A673 (cell line): ENCODE measurements at regions of chrX and their contacts with region 1.

Region 1: DNA sequence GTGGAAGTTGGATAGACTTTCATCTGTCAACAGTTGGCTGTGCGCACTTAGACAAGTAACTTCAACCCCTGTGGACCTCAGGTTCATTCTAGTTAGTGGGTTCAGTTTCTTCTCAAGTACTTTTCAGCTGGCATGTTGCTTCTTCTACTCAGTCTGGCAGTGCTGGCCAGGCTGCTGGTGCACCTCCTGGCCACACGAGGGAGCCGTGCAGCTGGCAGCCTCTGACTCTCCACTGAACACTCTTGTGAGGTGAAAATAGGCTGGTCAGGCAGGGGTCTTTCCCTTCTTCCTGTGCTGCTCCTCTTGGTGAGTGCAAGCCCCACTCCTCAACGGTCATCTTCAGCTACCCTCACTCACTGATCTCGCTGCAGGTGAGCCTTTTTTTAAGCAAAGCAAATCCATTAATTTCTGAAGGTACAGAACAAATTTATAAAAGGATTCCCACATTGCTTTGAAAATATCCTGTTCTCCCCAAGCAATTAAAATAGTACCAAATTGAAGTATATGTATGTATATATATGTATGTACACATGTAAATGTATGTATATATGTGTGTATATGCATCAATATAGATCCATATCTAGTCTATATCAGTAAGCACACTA is 30.6 kb downstream of the LONRF3 start:
- DNase-seq: peak; percentile 49
- H3K4me3 ChIP-seq: no peak overlapping the region
- H3K27ac ChIP-seq: no peak overlapping the region
- H3K4me1 ChIP-seq: no peaks in the 10 kb centered on the region
- H3K27me3 ChIP-seq: peaks cover 31% of the 10 kb centered on the region
- CTCF ChIP-seq: peak; percentile 94

Region 2: GRCh38 chrX:118627084-118627758 is 377.8 kb before region 1 on chrX:
- CTCF ChIA-PET with region 1: no interaction called
- POLR2A ChIA-PET with region 1: no interaction called
- intact Hi-C with region 1: loop called (anchors 10 kb)
- DNase-seq: peak; percentile 7
- H3K4me3 ChIP-seq: no peak overlapping the region
- H3K27ac ChIP-seq: no peak overlapping the region
- H3K4me1 ChIP-seq: no peaks in the 10 kb centered on the region
- H3K27me3 ChIP-seq: peaks cover 9% of the 10 kb centered on the region
- CTCF ChIP-seq: peak; percentile 52

Region 3: GRCh38 chrX:118847676-118848075 is 157.3 kb before region 1 on chrX:
- CTCF ChIA-PET with region 1: interaction called, 4 read pairs
- POLR2A ChIA-PET with region 1: no interaction called
- intact Hi-C with region 1: loop called (anchors 1 kb)
- DNase-seq: peak; percentile 72
- H3K4me3 ChIP-seq: no peak overlapping the region
- H3K27ac ChIP-seq: no peak overlapping the region
- H3K4me1 ChIP-seq: no peaks in the 10 kb centered on the region
- H3K27me3 ChIP-seq: no peaks in the 10 kb centered on the region
- CTCF ChIP-seq: peak; percentile 71

Region 4: GRCh38 chrX:119067023-119067739 is 62.2 kb after region 1 on chrX:
- CTCF ChIA-PET with region 1: no interaction called
- POLR2A ChIA-PET with region 1: no interaction called
- intact Hi-C with region 1: loop called (anchors 2 kb)
- DNase-seq: peak; percentile 63
- H3K4me3 ChIP-seq: no peak overlapping the region
- H3K27ac ChIP-seq: no peak overlapping the region
- H3K4me1 ChIP-seq: peaks cover 12% of the 10 kb centered on the region
- H3K27me3 ChIP-seq: peaks cover 4% of the 10 kb centered on the region
- CTCF ChIP-seq: peak; percentile 75